ENCODE measurements at regions of chr7 and their contacts with region 1.

Region 1: DNA sequence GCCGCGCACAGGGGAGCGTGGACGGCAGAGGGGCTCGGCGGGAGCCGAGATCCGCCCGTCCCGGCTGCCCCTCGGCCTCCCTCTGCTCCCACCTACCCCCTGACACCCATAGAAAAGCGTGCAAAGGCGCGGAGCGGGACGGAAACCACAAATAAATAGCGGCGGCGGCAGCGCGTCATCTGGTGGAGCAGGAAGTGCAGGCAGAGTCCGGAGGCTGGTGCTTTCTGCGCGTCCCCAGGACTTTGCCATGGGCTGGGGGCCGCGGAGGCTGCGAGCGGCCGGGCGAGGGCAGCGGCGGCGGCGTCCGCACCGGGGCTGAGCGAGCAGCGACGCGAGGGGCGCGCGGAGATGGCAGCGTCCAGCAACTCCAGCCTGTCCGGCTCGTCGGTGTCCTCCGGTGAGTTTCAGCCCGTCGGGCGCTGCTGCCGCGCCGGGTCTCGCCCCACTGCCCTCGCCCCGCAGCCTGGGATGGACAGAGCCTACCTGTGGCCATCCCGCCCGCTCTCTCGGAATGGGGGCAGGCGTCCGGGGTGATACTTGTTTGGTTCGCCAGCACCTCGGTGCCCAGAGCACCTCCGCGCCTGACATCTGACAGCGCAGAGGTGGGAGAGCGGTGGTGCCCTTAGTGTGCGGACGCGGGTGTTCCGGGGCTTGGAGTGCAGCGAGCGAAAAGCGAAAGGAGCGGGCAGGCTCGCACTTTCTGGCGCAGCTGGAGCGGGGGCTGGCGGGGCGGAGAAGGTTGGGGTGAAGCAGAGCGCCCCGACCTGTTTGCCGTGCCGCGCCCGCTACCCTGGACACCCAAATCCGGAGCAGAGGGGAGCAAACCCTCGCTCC is at the start of gene CHN2:
- DNase-seq: peak; percentile 68 to 75
- ATAC-seq: peak; percentile 61 to 79 (median 66)
- H3K4me3 ChIP-seq: peak within 1 kb of the TSS; percentile 79
- H3K4me3 Mint-ChIP-seq: peak within 1 kb of the TSS; percentile 93
- H3K27ac ChIP-seq: peak within 1 kb of the TSS; percentile 67
- H3K27ac Mint-ChIP-seq: peak within 1 kb of the TSS; percentile 88 to 92
- H3K4me1 ChIP-seq: peaks cover 19% of the 10 kb centered on the region
- H3K4me1 Mint-ChIP-seq: peaks cover 35 to 46% of the 10 kb centered on the region in 2 donors
- H3K27me3 ChIP-seq: no peaks in the 10 kb centered on the region
- H3K27me3 Mint-ChIP-seq: peaks cover 2 to 7% of the 10 kb centered on the region in 2 donors
- CTCF ChIP-seq: no peak
- total RNA-seq, gene CHN2: 23.2 to 40.6 (median 30.2) TPM

Region 2: GRCh38 chr7:29035044-29035740 is 159.6 kb before region 1 on chr7:
- intact Hi-C with region 1: loop called (anchors 5 kb)
- DNase-seq: peak; percentile 5 to 28
- ATAC-seq: peak; percentile 82 to 90 (median 82)
- H3K4me3 ChIP-seq: no peak overlapping the region
- H3K4me3 Mint-ChIP-seq: peak overlapping the region; percentile 66
- H3K27ac ChIP-seq: peak overlapping the region; percentile 58
- H3K27ac Mint-ChIP-seq: peak overlapping the region; percentile 85 to 88
- H3K4me1 ChIP-seq: peaks cover 26% of the 10 kb centered on the region
- H3K4me1 Mint-ChIP-seq: peaks cover 47 to 54% of the 10 kb centered on the region in 2 donors
- H3K27me3 ChIP-seq: no peaks in the 10 kb centered on the region
- H3K27me3 Mint-ChIP-seq: no peaks in the 10 kb centered on the region
- CTCF ChIP-seq: no peak

Region 3: GRCh38 chr7:29239638-29240037 is 44.8 kb after region 1 on chr7:
- intact Hi-C with region 1: loop called (anchors 1 kb)
- DNase-seq: peak in 1 of 2 donors; percentile 44
- ATAC-seq: no peak
- H3K4me3 ChIP-seq: no peak overlapping the region
- H3K4me3 Mint-ChIP-seq: no peak overlapping the region
- H3K27ac ChIP-seq: no peak overlapping the region
- H3K27ac Mint-ChIP-seq: no peak overlapping the region
- H3K4me1 ChIP-seq: peaks cover 7% of the 10 kb centered on the region
- H3K4me1 Mint-ChIP-seq: peaks cover 27 to 31% of the 10 kb centered on the region in 2 donors
- H3K27me3 ChIP-seq: no peaks in the 10 kb centered on the region
- H3K27me3 Mint-ChIP-seq: no peaks in the 10 kb centered on the region
- CTCF ChIP-seq: peak; percentile 32

Region 4: DNA sequence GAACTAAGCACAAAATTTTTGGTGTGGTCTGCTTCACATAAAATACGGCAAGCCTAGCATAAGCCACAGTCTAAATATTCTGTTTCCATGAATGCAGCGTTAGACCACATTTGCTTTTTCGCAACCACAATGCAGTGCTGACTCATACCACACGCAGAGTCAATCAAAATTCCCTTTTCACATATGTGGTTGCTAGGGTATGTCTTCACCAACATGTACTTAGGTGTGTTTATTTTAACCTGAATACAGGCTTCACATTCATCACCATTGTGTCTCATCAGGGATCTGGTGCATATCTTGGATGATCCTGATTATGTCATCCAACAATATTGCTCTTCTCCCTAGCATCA is 90.6 kb after region 1 on chr7:
- intact Hi-C with region 1: loop called (anchors 1 kb)
- DNase-seq: peak; percentile 40 to 73
- ATAC-seq: peak; percentile 81 to 95 (median 81)
- H3K4me3 ChIP-seq: no peak overlapping the region
- H3K4me3 Mint-ChIP-seq: peak overlapping the region; percentile 82
- H3K27ac ChIP-seq: no peak overlapping the region
- H3K27ac Mint-ChIP-seq: peak overlapping the region; percentile 78 to 85
- H3K4me1 ChIP-seq: peaks cover 26% of the 10 kb centered on the region
- H3K4me1 Mint-ChIP-seq: peaks cover 42 to 47% of the 10 kb centered on the region in 2 donors
- H3K27me3 ChIP-seq: no peaks in the 10 kb centered on the region
- H3K27me3 Mint-ChIP-seq: peaks cover 12 to 30% of the 10 kb centered on the region in 2 donors
- CTCF ChIP-seq: no peak

Region 5: DNA sequence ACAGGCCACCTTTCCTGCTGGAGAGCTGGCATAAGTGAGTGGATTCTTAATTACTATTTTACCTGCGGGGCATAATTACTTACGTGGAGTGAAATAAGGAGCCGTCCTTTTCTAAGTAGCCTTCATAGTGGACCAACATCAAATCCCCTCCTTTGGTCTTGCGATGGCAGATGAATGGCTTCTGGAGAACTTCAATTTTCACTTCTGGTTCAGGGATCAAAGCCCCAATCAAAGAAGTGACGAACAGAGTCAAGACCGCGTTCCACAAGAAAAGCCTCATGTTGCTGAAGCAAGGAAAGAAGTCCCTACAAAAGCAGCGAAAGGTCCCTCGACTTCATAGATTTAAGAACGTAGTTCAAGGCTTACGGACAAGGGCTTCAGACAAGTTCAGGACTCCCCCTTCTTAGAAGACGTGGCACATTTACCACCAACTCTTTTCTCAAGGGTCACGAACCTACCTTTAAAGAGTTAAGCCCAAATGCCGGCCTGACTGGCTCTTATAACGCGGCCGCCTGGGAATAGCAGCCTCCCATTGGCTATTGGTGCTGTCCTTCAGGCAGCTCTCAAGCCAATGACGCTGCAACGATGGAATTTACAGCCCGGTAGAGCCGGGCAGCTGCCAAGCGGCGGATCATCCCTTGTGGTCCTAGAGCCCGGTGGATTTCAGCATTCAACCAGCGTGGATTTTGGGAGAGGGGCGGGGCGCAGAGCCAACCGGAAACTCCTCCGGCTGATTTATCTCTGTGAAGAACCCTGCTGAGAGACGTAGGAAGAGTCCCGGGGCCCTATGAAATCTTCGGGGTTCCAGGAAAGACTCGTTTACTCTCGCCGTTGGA is 831.6 kb after region 1 on chr7 and contains the start of gene FKBP14:
- intact Hi-C with region 1: no loop called
- DNase-seq: peak; percentile 88 to 96
- ATAC-seq: peak; percentile 83 to 93 (median 87)
- H3K4me3 ChIP-seq: peak within 1 kb of the TSS; percentile 88
- H3K4me3 Mint-ChIP-seq: no peak within 1 kb of the TSS
- H3K27ac ChIP-seq: peak within 1 kb of the TSS; percentile 76
- H3K27ac Mint-ChIP-seq: peak within 1 kb of the TSS; percentile 85 to 92
- H3K4me1 ChIP-seq: peaks cover 15% of the 10 kb centered on the region
- H3K4me1 Mint-ChIP-seq: peaks cover 35 to 45% of the 10 kb centered on the region in 2 donors
- H3K27me3 ChIP-seq: no peaks in the 10 kb centered on the region
- H3K27me3 Mint-ChIP-seq: no peaks in the 10 kb centered on the region
- CTCF ChIP-seq: no peak
- total RNA-seq, gene FKBP14: 11.1 to 13.4 (median 11.9) TPM